AG04449 (cell line): ENCODE measurements at regions of chr1 and their contacts with region 1.

Region 1: GRCh38 chr1:31182352-31182751 is 57.3 kb downstream of the NKAIN1 start:
- DNase-seq: peak; percentile 63
- H3K4me3 ChIP-seq: 0 out of 2 replicates have a peak overlapping the region, but pooled peaks have one; percentile 6
- CTCF ChIP-seq: peak; percentile 24

Region 2: GRCh38 chr1:31159869-31160611 is 22.3 kb before region 1 on chr1:
- CTCF ChIA-PET with region 1: interaction called, 122 read pairs
- POLR2A ChIA-PET with region 1: no interaction called
- DNase-seq: no peak
- H3K4me3 ChIP-seq: no peak overlapping the region
- CTCF ChIP-seq: no peak

Region 3: GRCh38 chr1:31196685-31197084 is 14.3 kb after region 1 on chr1:
- CTCF ChIA-PET with region 1: interaction called, 67 read pairs
- POLR2A ChIA-PET with region 1: no interaction called
- DNase-seq: no peak
- H3K4me3 ChIP-seq: no peak overlapping the region
- CTCF ChIP-seq: no peak

Region 4: GRCh38 chr1:31335007-31335406 is 152.7 kb after region 1 on chr1:
- CTCF ChIA-PET with region 1: interaction called, 55 read pairs
- POLR2A ChIA-PET with region 1: no interaction called
- DNase-seq: no peak
- H3K4me3 ChIP-seq: no peak overlapping the region
- CTCF ChIP-seq: peak; percentile 31

Region 5: GRCh38 chr1:31422505-31423319 is 240.4 kb after region 1 on chr1:
- CTCF ChIA-PET with region 1: interaction called, 77 read pairs
- POLR2A ChIA-PET with region 1: no interaction called
- DNase-seq: no peak
- H3K4me3 ChIP-seq: no peak overlapping the region
- CTCF ChIP-seq: peak; percentile 92